Panc1 (cell line): ENCODE measurements at regions of chr17 and their contacts with region 1.

Region 1: DNA sequence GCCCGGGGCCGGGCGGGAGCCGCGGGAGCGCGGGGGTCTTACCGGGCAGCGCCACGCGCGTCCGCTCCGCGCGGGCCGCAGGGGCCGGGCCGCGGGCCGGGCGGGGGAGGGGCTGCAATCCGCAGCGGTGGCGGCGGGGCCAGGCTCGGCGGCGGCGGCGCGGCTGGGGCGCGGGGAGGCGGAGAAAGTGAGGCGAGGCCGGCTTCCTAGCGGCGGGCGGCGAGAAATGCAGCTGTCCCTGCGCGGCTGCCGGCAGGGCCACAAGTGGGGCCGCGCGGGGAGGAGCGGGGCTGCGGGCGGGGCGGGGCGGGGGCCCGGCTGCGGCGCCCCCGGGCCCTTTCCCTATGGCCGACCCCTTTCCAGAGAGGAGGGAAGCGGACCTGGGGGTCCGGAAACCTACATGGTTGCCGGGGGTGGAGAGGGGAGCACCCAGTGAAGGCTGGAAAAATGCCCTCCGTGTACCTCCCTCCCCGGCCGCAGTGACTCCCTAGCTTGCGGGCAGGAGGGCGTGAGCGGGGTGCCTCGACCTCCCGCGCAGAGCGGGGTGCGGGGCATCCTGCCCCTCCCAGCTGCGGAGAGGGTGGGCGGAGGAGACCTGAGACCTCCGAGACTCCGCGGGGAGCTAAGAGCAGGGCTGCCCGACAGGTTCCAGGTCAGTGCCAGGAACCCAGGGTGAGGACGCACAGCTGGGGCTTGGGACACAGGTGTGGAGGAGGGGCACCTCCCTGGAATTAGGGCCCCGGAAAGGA is at the start of gene CUEDC1:
- DNase-seq: no peak
- ATAC-seq: peak; percentile 82
- H3K4me3 ChIP-seq: peak within 1 kb of the TSS; percentile 73 to 81
- H3K27ac ChIP-seq: peak within 1 kb of the TSS; percentile 98
- H3K4me1 ChIP-seq: peaks cover 66% of the 10 kb centered on the region
- H3K27me3 ChIP-seq: no peaks in the 10 kb centered on the region
- CTCF ChIP-seq: no peak; the same call in 1 of the 2 replicates
- total RNA-seq, gene CUEDC1: 103 TPM

Region 2: GRCh38 chr17:57875309-57876115 is 79.8 kb before region 1 on chr17:
- CTCF ChIA-PET with region 1: no interaction called
- POLR2A ChIA-PET with region 1: interaction called, 11 read pairs
- in situ Hi-C with region 1: no loop called
- intact Hi-C with region 1: no loop called
- DNase-seq: peak; percentile 47
- ATAC-seq: peak; percentile 90
- H3K4me3 ChIP-seq: no peak overlapping the region
- H3K27ac ChIP-seq: peak overlapping the region; percentile 95
- H3K4me1 ChIP-seq: peaks cover 73% of the 10 kb centered on the region
- H3K27me3 ChIP-seq: no peaks in the 10 kb centered on the region
- CTCF ChIP-seq: no peak

Region 3: DNA sequence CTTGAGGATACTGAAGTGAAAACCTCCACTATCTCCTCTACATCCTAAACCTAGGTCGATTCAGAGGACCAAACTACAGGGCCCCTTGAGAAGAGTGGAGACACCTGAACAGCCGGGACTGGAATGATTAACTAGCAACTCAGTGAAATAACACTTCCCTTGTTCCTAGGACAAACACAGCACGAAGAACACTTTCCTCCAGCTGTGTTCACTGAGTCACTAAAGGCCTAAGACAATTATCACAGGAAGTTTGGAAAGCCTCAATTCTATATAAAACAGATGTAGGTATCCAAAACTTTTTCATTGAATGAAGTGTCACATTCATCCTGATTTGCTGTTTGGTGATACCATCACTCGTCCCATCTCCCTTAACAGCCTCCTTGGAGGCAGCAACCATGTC is 15.3 kb after region 1 on chr17:
- CTCF ChIA-PET with region 1: no interaction called
- POLR2A ChIA-PET with region 1: interaction called, 11 read pairs
- in situ Hi-C with region 1: no loop called
- intact Hi-C with region 1: no loop called
- DNase-seq: no peak
- ATAC-seq: no peak
- H3K4me3 ChIP-seq: no peak overlapping the region
- H3K27ac ChIP-seq: no peak overlapping the region; the same call in 1 of the 2 replicates
- H3K4me1 ChIP-seq: no peaks in the 10 kb centered on the region
- H3K27me3 ChIP-seq: no peaks in the 10 kb centered on the region
- CTCF ChIP-seq: no peak

Region 4: GRCh38 chr17:58032691-58033415 is 77.5 kb after region 1 on chr17:
- CTCF ChIA-PET with region 1: no interaction called
- POLR2A ChIA-PET with region 1: no interaction called
- in situ Hi-C with region 1: no loop called
- intact Hi-C with region 1: no loop called
- DNase-seq: no peak
- ATAC-seq: 0 out of 2 replicates have a peak, but pooled peaks have one; percentile 42
- H3K4me3 ChIP-seq: no peak overlapping the region
- H3K27ac ChIP-seq: no peak overlapping the region
- H3K4me1 ChIP-seq: no peaks in the 10 kb centered on the region
- H3K27me3 ChIP-seq: no peaks in the 10 kb centered on the region
- CTCF ChIP-seq: no peak

Region 5: GRCh38 chr17:58096892-58097291 is 141.5 kb after region 1 on chr17:
- CTCF ChIA-PET with region 1: no interaction called
- POLR2A ChIA-PET with region 1: no interaction called
- in situ Hi-C with region 1: no loop called
- intact Hi-C with region 1: no loop called
- DNase-seq: no peak
- ATAC-seq: peak; percentile 49; the same call in 1 of the 2 replicates
- H3K4me3 ChIP-seq: no peak overlapping the region
- H3K27ac ChIP-seq: no peak overlapping the region
- H3K4me1 ChIP-seq: no peaks in the 10 kb centered on the region
- H3K27me3 ChIP-seq: no peaks in the 10 kb centered on the region
- CTCF ChIP-seq: peak; percentile 37